ENCODE measurements at regions of chr18 and their contacts with region 1.

Region 1: GRCh38 chr18:11372163-11372562 is 222.8 kb upstream of the PIEZO2 start:
- DNase-seq: no peak
- ATAC-seq: no peak

Region 2: GRCh38 chr18:11224153-11224552 is 148.0 kb before region 1 on chr18:
- intact Hi-C with region 1: no loop called
- DNase-seq: no peak
- ATAC-seq: no peak

Region 3: DNA sequence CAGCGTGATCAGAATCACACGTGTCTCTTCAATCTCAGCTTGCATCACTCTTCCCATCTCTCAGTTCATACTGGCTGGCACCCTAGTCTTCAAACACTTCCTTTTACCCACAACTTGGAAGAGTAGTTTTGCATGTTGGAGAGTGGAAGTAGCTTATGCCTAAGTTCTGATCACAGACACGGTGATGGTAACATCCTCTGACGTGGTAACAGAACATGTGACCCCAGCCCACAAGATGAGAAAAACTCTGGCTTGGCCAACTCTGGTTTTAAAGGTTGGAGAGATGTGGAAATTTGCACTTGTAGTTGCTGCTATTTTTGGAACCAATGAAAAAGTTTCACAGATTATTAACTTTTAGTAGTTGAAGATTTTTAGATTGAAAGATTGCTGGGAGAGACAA is 81.9 kb after region 1 on chr18:
- intact Hi-C with region 1: loop called (anchors 2 kb)
- DNase-seq: no peak
- ATAC-seq: no peak

Measured in left ventricle myocardium superior (tissue), 1 donor.